GM12878 (cell line): ENCODE measurements at regions of chr6 and their contacts with region 1.

Region 1: DNA sequence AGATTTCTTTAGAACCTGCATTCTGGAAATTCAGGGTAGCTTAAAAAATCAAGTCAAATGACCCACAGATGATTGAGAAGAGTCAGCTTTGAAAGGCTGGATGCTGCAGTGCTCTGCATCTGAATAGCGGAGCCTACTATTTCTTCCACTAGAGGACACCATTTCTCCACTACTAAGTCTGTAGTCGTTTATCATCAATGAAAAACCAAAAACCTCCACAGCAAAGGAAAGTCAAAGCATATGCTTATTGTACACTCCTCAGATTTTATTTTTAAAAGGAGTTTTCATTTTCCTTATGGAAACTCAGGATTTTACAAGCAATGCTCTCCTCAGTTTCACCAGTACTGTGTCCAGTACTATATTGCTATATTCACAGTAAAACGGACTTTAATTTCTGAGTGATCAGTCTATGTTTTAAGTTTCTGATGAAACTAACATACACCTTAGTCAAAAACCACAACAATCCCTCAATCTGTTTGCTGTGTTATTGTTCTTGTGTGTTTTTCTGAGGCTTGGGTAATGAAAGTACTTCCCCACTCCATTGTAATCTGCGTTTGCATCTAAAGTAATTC is 50.5 kb upstream of the ENPP5 start:
- DNase-seq: peak; percentile 48
- ATAC-seq: peak; percentile 81
- H3K4me3 ChIP-seq: no peak overlapping the region
- H3K27ac ChIP-seq: no peak overlapping the region
- H3K4me1 ChIP-seq: peaks cover 29% of the 10 kb centered on the region
- H3K27me3 ChIP-seq: no peaks in the 10 kb centered on the region; a peak in 1 of 4 replicates
- CTCF ChIP-seq: peak; percentile 83 to 90 (median 90)
- EP300 ChIP-seq: no peak
- POLR2A ChIP-seq: no peak
- RAD21 ChIP-seq: peak; percentile 98

Region 2: DNA sequence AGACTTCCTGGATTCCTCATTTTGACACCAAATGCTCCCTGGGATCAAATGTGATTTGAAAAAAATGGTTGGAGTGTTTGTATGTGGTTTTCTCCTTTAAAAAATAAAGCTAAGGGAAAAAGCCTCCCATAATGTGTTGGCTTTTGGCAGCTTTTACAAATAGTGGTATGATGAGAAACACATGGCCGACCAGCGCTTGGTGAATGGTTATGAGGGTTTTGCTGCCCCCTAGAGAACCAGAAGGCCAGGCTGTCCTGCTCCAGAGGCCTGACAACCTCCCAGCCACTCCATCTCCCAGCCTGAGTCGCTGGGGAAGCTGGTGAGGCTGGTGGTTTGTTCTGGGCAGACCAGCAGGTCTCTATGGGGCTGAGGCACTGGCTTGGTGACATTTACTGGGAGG is 275.0 kb before region 1 on chr6:
- CTCF ChIA-PET with region 1: no interaction called
- POLR2A ChIA-PET with region 1: no interaction called
- RAD21 ChIA-PET with region 1: no interaction called
- SMC1A ChIA-PET with region 1: no interaction called
- in situ Hi-C with region 1: no loop called
- intact Hi-C with region 1: no loop called
- DNase-seq: no peak
- ATAC-seq: peak; percentile 78
- H3K4me3 ChIP-seq: no peak overlapping the region
- H3K27ac ChIP-seq: no peak overlapping the region
- H3K4me1 ChIP-seq: no peaks in the 10 kb centered on the region
- H3K27me3 ChIP-seq: peaks cover 0 to under 1% of the 10 kb centered on the region in 2 experiments; a peak in 1 of 4 replicates
- CTCF ChIP-seq: peak; percentile 17 to 35 (median 18); a peak in 1 of 6 replicates
- EP300 ChIP-seq: no peak
- POLR2A ChIP-seq: no peak
- RAD21 ChIP-seq: no peak

Region 3: DNA sequence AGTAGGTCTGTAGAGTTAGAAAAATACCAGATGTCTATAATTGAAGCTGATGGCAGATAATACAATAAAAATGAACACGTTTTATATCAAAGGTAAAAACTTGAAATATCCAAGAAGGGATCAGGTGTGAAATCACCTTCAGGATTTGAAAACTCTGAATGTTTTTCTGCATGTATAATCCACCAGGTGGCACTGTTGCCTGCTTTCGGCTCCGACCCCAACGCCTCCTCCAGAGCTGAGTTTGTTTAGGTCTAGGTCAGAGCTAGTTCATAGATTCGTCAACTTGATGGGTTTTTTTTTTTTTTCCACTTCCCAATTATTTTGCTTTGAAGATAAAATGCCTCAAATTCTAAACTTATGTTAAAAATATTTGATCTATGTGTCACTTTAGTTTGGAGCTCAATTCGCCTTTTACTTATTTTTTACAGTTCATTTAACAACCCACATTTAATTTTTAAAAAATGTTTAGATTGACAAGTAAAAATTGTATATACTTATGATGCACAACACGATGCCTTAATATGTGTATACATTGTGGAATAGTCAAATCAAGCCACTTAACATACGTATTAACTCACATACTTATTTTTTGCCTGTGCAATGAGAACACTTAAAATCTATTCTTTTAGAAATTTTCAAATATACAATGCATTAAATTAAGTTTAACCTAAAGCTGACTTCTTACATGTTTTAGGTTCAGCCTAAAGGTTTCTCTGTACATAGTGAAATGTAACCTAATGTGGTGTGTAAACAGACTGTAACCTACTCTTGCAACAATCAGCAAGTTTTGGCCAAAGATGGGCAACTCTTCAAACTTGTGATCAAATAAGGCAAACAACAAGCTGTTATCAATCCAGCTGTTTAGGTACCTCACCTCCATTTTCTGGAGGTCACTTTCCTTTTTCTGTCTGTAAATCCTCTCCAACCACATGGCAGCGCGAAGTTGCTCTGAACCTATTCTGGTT is 130.9 kb before region 1 on chr6:
- CTCF ChIA-PET with region 1: interaction called, 64 read pairs
- POLR2A ChIA-PET with region 1: interaction called, 5 read pairs
- RAD21 ChIA-PET with region 1: interaction called, 44 read pairs
- SMC1A ChIA-PET with region 1: interaction called, 49 read pairs
- in situ Hi-C with region 1: no loop called
- intact Hi-C with region 1: loop called (anchors 1 kb)
- DNase-seq: peak; percentile 17
- ATAC-seq: peak; percentile 84
- H3K4me3 ChIP-seq: no peak overlapping the region
- H3K27ac ChIP-seq: no peak overlapping the region
- H3K4me1 ChIP-seq: no peaks in the 10 kb centered on the region
- H3K27me3 ChIP-seq: no peaks in the 10 kb centered on the region
- CTCF ChIP-seq: peak; percentile 63 to 85 (median 68); a peak in 5 of 6 replicates
- EP300 ChIP-seq: no peak
- POLR2A ChIP-seq: no peak
- RAD21 ChIP-seq: peak; percentile 97

Region 4: DNA sequence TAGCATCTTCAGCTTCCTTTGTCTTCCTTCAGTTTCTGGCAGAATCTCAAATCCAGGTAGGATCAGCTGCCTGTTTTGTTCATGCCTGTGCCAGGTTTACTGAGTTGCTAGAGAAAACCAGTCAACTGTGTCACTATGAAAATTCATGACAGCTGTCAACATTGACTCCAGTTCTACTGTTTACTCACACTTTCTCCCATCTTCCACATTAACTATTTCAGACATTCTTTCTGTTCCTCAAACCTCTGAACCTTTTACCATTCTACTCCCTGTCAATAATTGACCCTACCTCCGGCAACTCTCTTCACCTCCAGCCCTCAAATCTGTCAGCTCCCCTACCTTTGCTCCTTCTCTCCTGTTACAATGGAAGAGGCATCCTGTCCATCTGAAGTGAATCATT is 83.0 kb before region 1 on chr6:
- CTCF ChIA-PET with region 1: interaction called, 5 read pairs
- POLR2A ChIA-PET with region 1: no interaction called
- RAD21 ChIA-PET with region 1: interaction called, 16 read pairs
- SMC1A ChIA-PET with region 1: interaction called, 13 read pairs
- in situ Hi-C with region 1: no loop called
- intact Hi-C with region 1: no loop called
- DNase-seq: no peak
- ATAC-seq: peak; percentile 72
- H3K4me3 ChIP-seq: 0 out of 2 replicates have a peak overlapping the region, but pooled peaks have one; percentile 14
- H3K27ac ChIP-seq: no peak overlapping the region
- H3K4me1 ChIP-seq: peaks cover 14% of the 10 kb centered on the region
- H3K27me3 ChIP-seq: no peaks in the 10 kb centered on the region
- CTCF ChIP-seq: no peak
- EP300 ChIP-seq: no peak
- POLR2A ChIP-seq: no peak
- RAD21 ChIP-seq: no peak

Region 5: DNA sequence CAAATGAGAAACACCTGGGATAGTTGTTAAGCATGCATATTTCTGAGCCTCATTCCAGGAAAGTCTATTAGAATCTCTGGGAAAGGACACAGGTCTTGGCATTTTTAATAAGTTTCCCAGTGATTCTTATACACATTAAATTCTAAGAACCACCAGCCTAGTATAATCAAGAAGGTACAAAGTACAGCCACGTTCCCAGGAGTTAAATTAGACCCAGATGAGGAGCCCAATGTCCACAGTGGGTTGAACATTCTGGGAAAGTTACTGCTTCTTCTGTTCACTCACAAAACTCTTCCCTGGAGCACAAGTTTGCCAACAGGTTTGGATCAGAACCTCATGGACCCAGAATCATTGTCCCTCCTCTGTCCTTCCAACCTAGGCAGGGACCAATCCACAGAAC is 179.6 kb after region 1 on chr6:
- CTCF ChIA-PET with region 1: no interaction called
- POLR2A ChIA-PET with region 1: no interaction called
- RAD21 ChIA-PET with region 1: interaction called, 3 read pairs
- SMC1A ChIA-PET with region 1: interaction called, 15 read pairs
- in situ Hi-C with region 1: loop called (anchors 5 kb)
- intact Hi-C with region 1: no loop called
- DNase-seq: no peak
- ATAC-seq: no peak
- H3K4me3 ChIP-seq: no peak overlapping the region
- H3K27ac ChIP-seq: no peak overlapping the region
- H3K4me1 ChIP-seq: no peaks in the 10 kb centered on the region
- H3K27me3 ChIP-seq: peaks cover 0 to 2% of the 10 kb centered on the region in 2 experiments; a peak in 1 of 4 replicates
- CTCF ChIP-seq: no peak
- EP300 ChIP-seq: no peak
- POLR2A ChIP-seq: no peak
- RAD21 ChIP-seq: no peak

Region 6: DNA sequence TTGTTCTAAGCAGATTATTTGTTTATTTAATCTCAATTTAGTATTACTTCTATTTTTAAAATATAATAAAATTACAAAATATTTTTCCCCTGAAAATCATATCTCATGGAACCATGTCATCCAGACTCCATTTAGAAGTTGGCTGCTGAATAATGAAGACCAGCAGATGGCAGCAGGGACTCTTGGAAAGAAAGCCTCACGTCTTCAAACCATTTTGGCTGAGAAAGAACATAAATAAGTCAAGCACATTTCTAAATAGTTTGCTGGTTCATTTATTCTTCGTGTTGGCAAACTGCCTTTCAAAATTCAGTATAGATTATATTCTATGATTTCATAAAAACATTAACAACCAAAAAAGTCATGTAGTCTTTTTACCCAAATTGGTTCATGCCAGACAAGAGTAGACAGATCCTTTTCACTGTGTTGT is 198.3 kb after region 1 on chr6:
- CTCF ChIA-PET with region 1: interaction called, 30 read pairs
- POLR2A ChIA-PET with region 1: no interaction called
- RAD21 ChIA-PET with region 1: interaction called, 3 read pairs
- SMC1A ChIA-PET with region 1: interaction called, 9 read pairs
- in situ Hi-C with region 1: no loop called
- intact Hi-C with region 1: no loop called
- DNase-seq: peak; percentile 8
- ATAC-seq: peak; percentile 60
- H3K4me3 ChIP-seq: no peak overlapping the region
- H3K27ac ChIP-seq: no peak overlapping the region
- H3K4me1 ChIP-seq: no peaks in the 10 kb centered on the region
- H3K27me3 ChIP-seq: no peaks in the 10 kb centered on the region
- CTCF ChIP-seq: peak; percentile 54 to 65 (median 59); a peak in 5 of 6 replicates
- EP300 ChIP-seq: no peak
- POLR2A ChIP-seq: no peak
- RAD21 ChIP-seq: peak; percentile 88

Region 7: DNA sequence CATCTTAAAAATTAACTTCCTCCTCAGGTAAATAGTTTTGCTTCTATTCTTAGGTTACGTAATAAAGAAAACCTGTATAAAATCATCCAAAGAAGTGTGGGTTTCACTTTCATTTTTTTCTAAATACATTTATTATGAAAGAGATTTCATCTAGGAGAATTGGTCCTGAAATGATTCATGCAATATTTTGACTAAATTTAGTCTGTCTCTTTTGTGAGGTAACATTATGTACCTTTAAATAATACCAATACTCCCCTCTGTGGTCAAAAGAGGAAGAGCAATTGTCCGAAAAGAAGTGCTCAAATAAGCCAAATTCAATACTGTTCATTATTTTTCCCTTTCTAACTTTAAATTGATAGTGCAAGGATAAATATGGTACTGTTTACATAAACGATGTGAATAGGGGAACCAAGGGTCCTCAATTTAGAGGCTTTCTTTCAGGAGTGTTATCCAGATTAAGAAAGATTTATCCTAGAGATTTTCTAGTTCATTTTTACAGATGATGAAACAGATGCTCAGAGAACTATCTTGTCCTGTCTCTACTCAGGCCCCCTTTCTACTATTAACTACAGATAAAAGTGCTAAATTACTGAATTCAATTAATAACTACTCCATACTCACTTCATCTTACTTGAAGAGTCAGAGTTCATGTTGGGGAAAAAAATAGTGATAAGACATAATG is 405.1 kb after region 1 on chr6:
- CTCF ChIA-PET with region 1: interaction called, 9 read pairs
- POLR2A ChIA-PET with region 1: no interaction called
- RAD21 ChIA-PET with region 1: no interaction called
- SMC1A ChIA-PET with region 1: interaction called, 3 read pairs
- in situ Hi-C with region 1: loop called (anchors 5 kb)
- intact Hi-C with region 1: loop called (anchors 1 kb)
- DNase-seq: peak; percentile 7
- ATAC-seq: peak; percentile 88
- H3K4me3 ChIP-seq: no peak overlapping the region
- H3K27ac ChIP-seq: no peak overlapping the region
- H3K4me1 ChIP-seq: no peaks in the 10 kb centered on the region
- H3K27me3 ChIP-seq: peaks cover 0 to 2% of the 10 kb centered on the region in 2 experiments; a peak in 1 of 4 replicates
- CTCF ChIP-seq: peak; percentile 40 to 60 (median 57); a peak in 4 of 6 replicates
- EP300 ChIP-seq: no peak
- POLR2A ChIP-seq: no peak
- RAD21 ChIP-seq: peak; percentile 72